Esophagus muscularis mucosa (tissue), 4 donors: ENCODE measurements at regions of chr10 and their contacts with region 1.

Region 1: GRCh38 chr10:78458983-78459638 is 425.4 kb downstream of the RPS24 start:
- DNase-seq: no peak
- H3K4me3 ChIP-seq: no peak overlapping the region
- H3K27ac ChIP-seq: no peak overlapping the region
- H3K4me1 ChIP-seq: peaks cover 0 to 11% (median 5%) of the 10 kb centered on the region in 4 donors
- H3K27me3 ChIP-seq: no peaks in the 10 kb centered on the region
- CTCF ChIP-seq: no peak
- EP300 ChIP-seq: no peak
- POLR2A ChIP-seq: no peak

Region 2: DNA sequence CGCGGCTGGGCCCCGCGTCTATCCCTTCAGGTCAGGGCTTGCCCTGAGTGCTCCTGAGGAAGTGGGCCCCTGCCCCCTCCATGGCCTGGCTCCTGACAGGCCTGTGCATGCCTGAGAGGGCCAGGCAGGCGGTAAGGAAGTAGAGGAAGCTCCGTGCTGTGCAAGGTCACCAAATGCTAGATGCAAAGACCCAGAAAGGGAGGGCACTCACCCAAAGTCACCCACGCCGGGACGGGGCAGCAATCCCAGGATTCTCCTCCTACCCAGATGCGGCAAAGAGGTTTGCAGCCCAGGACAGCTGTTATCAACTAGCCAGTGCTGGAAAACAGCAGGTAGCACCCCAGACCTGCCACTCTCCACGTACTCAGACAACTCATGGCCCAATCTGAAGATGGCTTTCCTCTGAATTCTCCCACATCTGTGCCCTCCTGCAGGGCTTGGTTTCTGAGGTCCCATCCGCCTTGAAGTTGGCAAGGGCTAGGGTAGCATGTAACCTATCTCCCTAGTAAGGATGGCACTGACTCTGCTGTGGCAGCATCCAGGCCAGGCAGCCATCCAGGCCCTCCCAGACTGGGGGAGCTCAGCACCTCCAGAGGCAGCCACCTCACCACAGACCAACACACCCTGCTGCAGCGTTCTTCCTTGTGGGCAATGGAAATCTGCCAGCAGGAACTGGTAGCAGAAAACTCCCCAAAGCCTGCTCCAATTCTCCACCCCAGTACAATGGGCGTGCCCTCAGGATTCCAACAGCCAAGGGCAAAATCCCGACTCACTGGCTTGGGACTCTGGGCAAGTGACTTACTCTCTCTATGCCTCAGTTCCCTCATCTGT is 560.2 kb before region 1 on chr10:
- intact Hi-C with region 1: no loop called
- DNase-seq: no peak
- H3K4me3 ChIP-seq: no peak overlapping the region
- H3K27ac ChIP-seq: peak overlapping the region in 3 of 4 donors; percentile 36 to 52 (median 42)
- H3K4me1 ChIP-seq: peaks cover 35 to 84% (median 78%) of the 10 kb centered on the region in 4 donors
- H3K27me3 ChIP-seq: no peaks in the 10 kb centered on the region
- CTCF ChIP-seq: no peak
- EP300 ChIP-seq: no peak
- POLR2A ChIP-seq: no peak

Region 3: GRCh38 chr10:78203915-78204818 is 254.9 kb before region 1 on chr10:
- intact Hi-C with region 1: loop called (anchors 10 kb)
- DNase-seq: no peak
- H3K4me3 ChIP-seq: no peak overlapping the region
- H3K27ac ChIP-seq: no peak overlapping the region
- H3K4me1 ChIP-seq: peaks cover 0 to 10% (median 6%) of the 10 kb centered on the region in 4 donors
- H3K27me3 ChIP-seq: no peaks in the 10 kb centered on the region
- CTCF ChIP-seq: no peak
- EP300 ChIP-seq: no peak
- POLR2A ChIP-seq: no peak

Region 4: GRCh38 chr10:80025281-80025680 is 1566.2 kb after region 1 on chr10:
- intact Hi-C with region 1: no loop called
- DNase-seq: no peak
- H3K4me3 ChIP-seq: no peak overlapping the region
- H3K27ac ChIP-seq: no peak overlapping the region
- H3K4me1 ChIP-seq: no peaks in the 10 kb centered on the region
- H3K27me3 ChIP-seq: no peaks in the 10 kb centered on the region
- CTCF ChIP-seq: no peak
- EP300 ChIP-seq: no peak
- POLR2A ChIP-seq: no peak